ENCODE measurements at regions of chr6 and their contacts with region 1.

Region 1: DNA sequence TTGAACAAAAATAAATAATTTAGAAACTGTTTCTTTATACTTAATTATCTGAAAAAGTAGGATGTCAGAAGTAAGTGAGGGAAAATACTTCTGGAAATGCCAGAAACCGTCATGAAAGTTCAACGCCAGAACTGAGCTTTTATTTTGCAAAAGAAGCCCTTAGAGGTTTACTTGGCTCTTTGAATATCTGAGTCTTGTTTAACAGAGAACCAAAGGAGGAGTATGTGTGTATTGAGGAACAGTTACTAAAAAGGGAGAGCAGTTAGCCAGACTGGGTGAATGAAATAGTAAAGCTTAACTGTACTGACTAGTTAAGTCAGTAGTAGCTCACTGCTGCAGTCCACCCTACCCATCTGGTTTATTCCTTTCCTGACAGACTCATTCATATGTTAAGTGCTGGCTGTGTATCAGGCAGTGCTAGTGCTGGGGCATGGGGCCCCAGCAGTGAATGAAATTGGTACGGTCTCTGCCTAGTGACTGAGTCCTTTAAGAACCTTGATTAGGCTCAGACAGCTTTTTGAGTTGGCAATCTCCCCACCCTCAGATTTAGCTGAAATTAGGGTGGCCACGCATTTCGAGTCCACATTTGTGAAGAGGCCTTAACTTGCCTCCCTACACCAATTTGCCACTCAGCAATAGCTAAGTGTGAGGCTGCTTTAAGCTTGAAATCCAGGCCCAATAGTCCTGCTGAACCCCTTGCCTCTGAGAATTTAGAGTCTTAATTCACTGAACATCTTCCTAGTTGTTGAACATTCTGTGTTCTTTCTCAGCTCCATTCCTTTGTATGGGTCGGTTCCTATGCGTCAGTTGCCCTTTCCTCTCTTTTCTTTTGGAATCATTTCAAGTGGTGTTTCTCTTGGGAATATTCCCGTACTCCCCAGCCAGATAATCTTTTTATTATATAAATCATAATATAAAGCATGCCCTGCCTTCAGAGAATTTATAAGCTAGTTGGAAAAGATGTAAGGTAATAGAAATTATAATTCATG is 20.2 kb downstream of the MAP3K4 start:
- DNase-seq: no peak
- H3K4me3 ChIP-seq: peak overlapping the region in 3 of 4 experiments; percentile 16 to 49 (median 23); a peak in 5 of 8 replicates
- H3K27ac ChIP-seq: peak overlapping the region; percentile 70
- H3K4me1 ChIP-seq: peaks cover 4 to 24% (median 14%) of the 10 kb centered on the region in 4 experiments; a peak in 6 of 7 replicates
- H3K27me3 ChIP-seq: no peaks in the 10 kb centered on the region
- CTCF ChIP-seq: no peak
- EP300 ChIP-seq: 0 out of 3 replicates have a peak, but pooled peaks of 1 of the 2 experiments have one; percentile 47
- POLR2A ChIP-seq: 0 out of 3 replicates have a peak, but pooled peaks of 1 of the 2 experiments have one; percentile 42
- RAD21 ChIP-seq: no peak

Region 2: DNA sequence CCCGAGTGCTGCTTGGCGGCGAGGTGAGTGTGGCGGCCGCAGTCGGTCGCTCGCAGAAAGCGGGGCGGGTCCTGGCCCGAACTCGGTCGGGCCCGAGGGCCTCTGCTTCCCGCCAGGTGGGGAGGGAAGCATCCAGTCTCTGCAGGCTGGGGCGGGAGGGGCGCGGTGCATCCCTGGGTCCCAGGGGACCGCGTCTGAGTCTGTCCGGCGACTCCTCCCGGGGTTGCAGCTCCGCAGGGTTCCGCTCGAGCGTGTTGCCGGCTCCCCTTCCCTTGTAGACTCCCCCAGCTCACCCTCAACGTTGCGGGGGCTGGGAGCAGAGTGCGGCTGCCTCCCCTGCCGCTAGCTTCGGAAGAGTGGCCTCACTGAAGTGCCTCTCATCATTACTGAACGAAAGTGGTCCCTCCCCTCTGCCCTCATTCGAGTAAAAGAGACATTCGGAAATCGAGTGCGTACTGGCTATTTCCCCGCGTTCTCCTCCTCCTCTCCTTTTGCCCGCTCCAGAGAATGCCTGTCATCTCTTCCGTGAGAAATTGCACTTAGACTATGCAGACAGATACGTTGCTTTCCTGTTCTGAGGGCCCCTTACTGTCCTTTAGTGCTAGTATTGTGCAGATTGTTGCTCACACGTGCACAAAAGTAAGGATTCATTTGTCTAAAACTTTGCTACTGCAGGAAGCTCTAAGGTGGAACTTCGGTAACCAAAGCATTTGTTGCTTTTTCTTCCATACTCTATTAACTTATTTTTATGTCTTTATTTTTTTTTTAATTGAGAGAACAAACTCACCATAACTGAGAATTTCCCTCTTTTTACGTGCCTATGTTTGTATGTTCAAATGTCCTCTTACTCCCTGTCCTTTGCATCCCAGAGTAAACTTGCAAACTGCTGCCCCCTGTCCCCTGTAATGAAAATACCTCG is 19.5 kb before region 1 on chr6:
- CTCF ChIA-PET with region 1: interaction called, 23 read pairs
- POLR2A ChIA-PET with region 1: interaction called, 11 read pairs
- DNase-seq: peak in 1 of 2 experiments; percentile 71
- H3K4me3 ChIP-seq: peak overlapping the region; percentile 80 to 91 (median 86)
- H3K27ac ChIP-seq: peak overlapping the region; percentile 81
- H3K4me1 ChIP-seq: peaks cover 0 to 6% (median 0%) of the 10 kb centered on the region in 4 experiments; a peak in 1 of 7 replicates
- H3K27me3 ChIP-seq: no peaks in the 10 kb centered on the region; a peak in 1 of 7 replicates
- CTCF ChIP-seq: peak; percentile 10 to 67 (median 55)
- EP300 ChIP-seq: no peak
- POLR2A ChIP-seq: peak in 1 of 2 experiments; percentile 68; a peak in 2 of 3 replicates
- RAD21 ChIP-seq: peak; percentile 67 to 70

Region 3: GRCh38 chr6:161023316-161023715 is 11.5 kb after region 1 on chr6:
- CTCF ChIA-PET with region 1: interaction called, 4 read pairs
- POLR2A ChIA-PET with region 1: interaction called, 11 read pairs
- DNase-seq: no peak
- H3K4me3 ChIP-seq: no peak overlapping the region
- H3K27ac ChIP-seq: no peak overlapping the region
- H3K4me1 ChIP-seq: no peaks in the 10 kb centered on the region
- H3K27me3 ChIP-seq: no peaks in the 10 kb centered on the region
- CTCF ChIP-seq: no peak
- EP300 ChIP-seq: no peak
- POLR2A ChIP-seq: no peak
- RAD21 ChIP-seq: no peak